Ovary (tissue), 10 donors: ENCODE measurements at regions of chr22 and their contacts with region 1.

Region 1: GRCh38 chr22:46576556-46577367 is 39.3 kb upstream of the CELSR1 start:
- DNase-seq: peak; percentile 42 to 75 (median 63)
- H3K4me3 ChIP-seq: peak overlapping the region; percentile 71
- H3K27ac ChIP-seq: no peak overlapping the region
- H3K4me1 ChIP-seq: peaks cover 11% of the 10 kb centered on the region
- H3K27me3 ChIP-seq: no peaks in the 10 kb centered on the region
- CTCF ChIP-seq: no peak
- EP300 ChIP-seq: no peak
- POLR2A ChIP-seq: no peak

Region 2: DNA sequence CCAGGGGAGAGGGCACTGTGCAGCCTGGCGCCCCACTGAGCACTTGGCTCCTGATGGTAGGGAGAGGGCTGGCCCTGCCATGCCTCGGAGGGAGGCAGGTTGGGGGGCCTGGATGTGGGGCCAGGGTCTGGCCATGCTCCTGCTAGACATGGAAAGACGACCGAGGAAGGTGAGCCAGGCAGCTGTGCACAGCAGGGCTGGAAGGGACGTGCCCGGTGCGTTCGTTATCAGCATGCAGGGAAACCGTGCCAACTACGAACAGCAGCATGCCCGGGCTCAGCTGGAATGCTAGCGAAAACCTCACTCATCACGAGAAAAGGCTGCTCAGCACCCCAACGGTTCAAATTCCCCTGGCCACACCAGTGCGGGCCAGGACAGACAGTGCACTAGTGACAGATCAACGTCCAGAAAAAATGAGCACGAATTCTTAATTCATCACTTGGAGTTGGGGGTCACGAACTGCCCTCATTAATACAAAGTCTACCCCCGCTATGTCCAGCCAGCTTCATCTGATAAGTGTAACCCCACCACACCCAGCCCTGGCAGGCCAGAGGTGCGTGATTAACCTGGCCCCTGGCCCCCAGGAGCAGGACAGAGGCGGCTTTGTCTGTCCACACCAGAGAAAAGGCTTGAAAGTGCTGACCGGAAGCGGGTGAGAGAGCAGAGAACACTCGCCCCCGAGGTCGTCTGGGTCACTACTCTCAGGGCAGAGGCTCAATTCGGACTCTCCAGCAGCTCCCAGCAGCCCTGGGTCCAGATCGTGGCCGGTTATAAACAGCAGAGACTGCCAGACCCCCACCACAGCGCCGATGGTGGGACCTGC is 123.5 kb before region 1 on chr22:
- intact Hi-C with region 1: no loop called
- DNase-seq: no peak
- H3K4me3 ChIP-seq: no peak overlapping the region
- H3K27ac ChIP-seq: no peak overlapping the region
- H3K4me1 ChIP-seq: no peaks in the 10 kb centered on the region
- H3K27me3 ChIP-seq: no peaks in the 10 kb centered on the region
- CTCF ChIP-seq: no peak
- EP300 ChIP-seq: no peak
- POLR2A ChIP-seq: no peak

Region 3: GRCh38 chr22:46661221-46661851 is 84.6 kb after region 1 on chr22:
- intact Hi-C with region 1: loop called in 1 of 4 experiments (anchors 10 kb)
- DNase-seq: no peak
- H3K4me3 ChIP-seq: no peak overlapping the region
- H3K27ac ChIP-seq: no peak overlapping the region
- H3K4me1 ChIP-seq: no peaks in the 10 kb centered on the region
- H3K27me3 ChIP-seq: no peaks in the 10 kb centered on the region
- CTCF ChIP-seq: no peak
- EP300 ChIP-seq: no peak
- POLR2A ChIP-seq: no peak

Region 4: GRCh38 chr22:46674367-46674781 is 97.6 kb after region 1 on chr22:
- intact Hi-C with region 1: loop called in 2 of 4 experiments (anchors 10 kb)
- DNase-seq: peak in 1 of 5 donors; percentile 59
- H3K4me3 ChIP-seq: no peak overlapping the region
- H3K27ac ChIP-seq: no peak overlapping the region
- H3K4me1 ChIP-seq: no peaks in the 10 kb centered on the region
- H3K27me3 ChIP-seq: no peaks in the 10 kb centered on the region
- CTCF ChIP-seq: no peak
- EP300 ChIP-seq: no peak
- POLR2A ChIP-seq: no peak